ENCODE measurements at regions of chr1 and their contacts with region 1.

Region 1: GRCh38 chr1:31789259-31790065 is 25.3 kb upstream of the ADGRB2 start:
- DNase-seq: peak; percentile 99

Region 2: GRCh38 chr1:31531177-31531999 is 258.1 kb before region 1 on chr1:
- CTCF ChIA-PET with region 1: no interaction called
- POLR2A ChIA-PET with region 1: no interaction called
- DNase-seq: no peak

Region 3: GRCh38 chr1:31548907-31549808 is 240.3 kb before region 1 on chr1:
- CTCF ChIA-PET with region 1: interaction called, 11 read pairs
- POLR2A ChIA-PET with region 1: no interaction called
- DNase-seq: peak; percentile 96

Region 4: DNA sequence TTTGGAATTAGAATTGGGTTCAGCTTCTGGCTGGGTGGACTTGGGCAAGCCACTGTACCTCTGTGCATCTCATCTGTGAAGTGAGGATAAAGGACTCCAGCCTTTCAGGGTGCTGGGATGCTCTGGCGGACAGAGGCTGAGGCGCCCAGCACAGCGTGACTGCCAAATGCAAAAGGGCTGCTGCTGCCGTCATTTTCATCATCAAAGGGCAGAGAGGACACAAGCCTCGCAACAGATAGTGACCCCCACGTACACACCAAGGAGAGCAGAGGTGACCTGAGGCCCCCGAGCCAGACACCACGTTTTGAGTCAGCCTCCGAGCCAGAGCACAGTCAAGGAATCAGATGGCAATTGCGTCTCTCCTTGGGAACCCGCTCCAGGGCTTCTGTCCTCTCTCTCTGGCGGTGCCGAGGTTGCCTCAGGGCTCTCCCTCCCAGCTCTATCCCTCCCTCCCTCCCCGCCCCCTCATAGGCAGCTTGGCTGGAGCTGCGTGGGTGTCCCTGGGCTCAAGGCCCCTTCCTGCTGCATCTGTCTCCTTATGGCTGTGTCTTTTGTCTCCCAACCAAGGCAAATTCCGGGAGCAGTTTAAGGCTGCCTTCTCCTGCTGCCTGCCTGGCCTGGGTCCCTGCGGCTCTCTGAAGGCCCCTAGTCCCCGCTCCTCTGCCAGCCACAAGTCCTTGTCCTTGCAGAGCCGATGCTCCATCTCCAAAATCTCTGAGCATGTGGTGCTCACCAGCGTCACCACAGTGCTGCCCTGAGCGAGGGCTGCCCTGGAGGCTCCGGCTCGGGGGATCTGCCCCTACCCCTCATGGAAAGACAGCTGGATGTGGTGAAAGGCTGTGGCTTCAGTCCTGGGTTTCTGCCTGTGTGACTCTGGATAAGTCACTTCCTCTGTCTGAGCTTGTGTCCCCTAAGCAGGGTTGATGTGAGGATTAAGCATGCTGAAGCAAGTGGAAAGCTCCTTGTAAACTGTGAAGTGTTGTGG is 162.9 kb before region 1 on chr1:
- CTCF ChIA-PET with region 1: no interaction called
- POLR2A ChIA-PET with region 1: no interaction called
- DNase-seq: no peak

Region 5: DNA sequence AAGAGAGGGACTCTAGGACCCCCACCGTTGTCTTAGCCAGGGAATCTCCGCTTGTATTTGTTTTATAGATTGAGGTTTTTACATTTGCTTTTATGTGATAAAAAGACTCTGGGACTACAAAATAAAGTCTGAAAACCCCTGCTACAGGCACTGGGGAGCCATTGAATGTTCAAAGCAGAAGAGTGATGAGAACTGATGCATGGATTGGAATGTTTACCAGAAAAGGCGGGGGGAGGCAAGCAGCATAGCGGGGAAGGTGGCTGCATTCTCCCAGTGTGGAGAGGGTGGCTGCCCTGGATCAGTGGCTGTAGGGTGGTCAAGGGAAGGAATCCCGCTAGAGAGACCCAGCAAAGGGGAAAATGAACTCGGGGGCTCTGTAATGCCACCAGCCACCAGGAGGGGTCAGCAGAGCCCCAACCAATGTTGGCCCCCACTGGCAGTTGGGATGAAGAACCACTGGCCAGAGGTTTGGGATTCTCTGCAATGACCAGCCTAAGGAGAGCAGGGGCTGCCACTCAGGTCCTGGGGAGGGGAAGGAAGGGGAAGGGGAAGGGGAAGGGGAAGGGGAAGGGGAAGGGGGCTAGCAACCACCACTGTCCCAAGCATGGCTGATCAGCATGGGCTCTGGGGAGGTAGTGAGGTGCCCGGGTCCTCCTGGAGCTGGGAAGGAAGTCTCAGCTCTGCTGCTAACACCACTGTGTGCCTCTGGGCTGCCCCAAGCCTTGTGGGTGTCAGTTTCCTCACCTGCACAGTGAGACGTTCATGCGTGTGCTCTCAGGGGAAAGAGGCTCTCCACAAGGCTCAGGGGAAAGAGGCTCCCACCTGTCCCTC is 125.6 kb before region 1 on chr1:
- CTCF ChIA-PET with region 1: interaction called, 22 read pairs
- POLR2A ChIA-PET with region 1: no interaction called
- DNase-seq: peak; percentile 95

Region 6: GRCh38 chr1:31715087-31715872 is 74.2 kb before region 1 on chr1:
- CTCF ChIA-PET with region 1: interaction called, 17 read pairs
- POLR2A ChIA-PET with region 1: interaction called, 8 read pairs
- DNase-seq: peak; percentile 96

Region 7: DNA sequence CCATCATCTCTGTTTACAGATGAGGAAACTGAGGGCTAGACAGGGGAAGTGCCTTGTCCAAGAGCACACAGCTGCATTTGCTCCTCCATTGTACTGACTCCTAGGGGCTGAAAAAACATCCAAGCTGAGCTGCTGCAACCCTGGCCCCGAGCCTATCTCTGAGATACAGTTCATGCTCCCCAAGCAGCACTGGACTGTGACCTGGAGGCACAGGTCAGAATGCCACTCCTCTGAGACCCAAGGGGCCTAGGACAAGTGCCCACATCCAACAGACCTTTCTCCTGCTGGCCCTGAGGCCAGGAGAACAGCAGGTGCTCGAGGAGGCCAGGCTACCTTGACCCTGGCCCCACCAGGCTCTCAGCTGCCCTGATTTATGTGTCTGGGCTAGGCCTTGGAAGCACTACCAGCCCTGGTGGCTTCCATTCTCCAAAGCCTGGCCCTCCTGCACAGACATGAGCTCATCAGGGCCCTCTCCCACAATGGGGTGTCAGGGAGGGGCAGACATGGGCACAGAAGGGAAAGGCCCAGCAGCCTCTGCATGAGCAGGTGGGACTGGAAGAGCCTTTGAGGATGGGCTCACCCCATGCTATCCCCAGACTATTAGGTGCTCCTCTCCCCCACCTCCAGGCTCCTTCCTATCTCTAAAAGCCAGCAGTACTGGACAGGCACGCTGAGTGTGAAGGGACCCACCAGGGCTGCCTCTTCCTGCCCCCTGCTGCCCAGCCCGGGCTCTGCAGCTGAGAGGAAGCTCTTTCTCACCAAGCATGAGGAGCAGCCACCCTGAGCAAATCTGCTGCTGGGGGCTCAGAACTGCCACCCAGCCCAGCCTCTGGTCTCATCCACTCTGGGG is 44.1 kb before region 1 on chr1:
- CTCF ChIA-PET with region 1: interaction called, 18 read pairs
- POLR2A ChIA-PET with region 1: no interaction called
- DNase-seq: peak; percentile 95

Region 8: DNA sequence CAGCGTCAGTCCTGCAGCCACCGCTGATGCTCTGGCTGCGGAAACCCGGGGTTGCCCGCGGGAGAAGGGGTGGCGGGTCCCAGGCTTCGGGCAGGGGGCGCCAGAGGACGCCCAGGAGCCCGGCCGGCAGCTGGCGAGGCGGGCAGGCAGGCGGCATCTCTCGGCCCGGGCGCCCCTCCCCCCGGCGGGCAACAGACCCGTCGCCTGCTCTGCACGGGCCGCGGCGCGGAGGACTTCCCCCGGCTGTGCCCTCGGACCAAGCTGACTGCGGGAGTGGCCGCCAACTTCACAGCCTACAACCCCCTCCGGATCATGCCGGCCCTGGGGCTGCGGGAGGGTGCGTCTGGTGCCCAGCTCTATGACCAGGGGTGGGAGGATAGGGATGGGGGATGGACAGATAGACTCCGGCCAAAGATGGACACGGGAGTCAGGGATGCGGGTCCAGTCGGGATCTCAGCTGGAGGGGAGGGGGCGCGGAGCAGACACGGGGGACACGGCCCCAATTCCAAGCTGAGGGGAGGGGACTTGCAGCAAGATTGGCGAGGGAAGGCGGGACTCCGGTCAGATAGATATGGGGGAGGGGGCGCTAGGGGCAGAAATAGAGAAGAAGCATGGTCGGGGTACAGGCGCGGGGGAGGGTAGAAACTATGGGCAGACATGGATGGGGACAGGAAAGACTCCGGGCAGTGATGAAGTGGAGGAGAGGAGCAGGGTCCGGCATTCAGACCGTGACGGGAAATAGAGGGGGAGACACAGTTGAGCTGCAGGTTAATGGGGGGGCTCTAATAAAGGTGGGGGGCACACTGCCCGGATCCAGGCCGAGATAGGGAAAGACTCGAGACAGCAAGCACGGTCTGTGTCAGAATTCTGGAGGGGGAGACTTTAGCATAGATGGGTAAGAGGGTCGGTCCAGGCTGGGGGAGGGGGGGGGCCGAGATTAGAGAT is 26.5 kb before region 1 on chr1:
- CTCF ChIA-PET with region 1: interaction called, 17 read pairs
- POLR2A ChIA-PET with region 1: interaction called, 3 read pairs
- DNase-seq: peak; percentile 88

Region 9: DNA sequence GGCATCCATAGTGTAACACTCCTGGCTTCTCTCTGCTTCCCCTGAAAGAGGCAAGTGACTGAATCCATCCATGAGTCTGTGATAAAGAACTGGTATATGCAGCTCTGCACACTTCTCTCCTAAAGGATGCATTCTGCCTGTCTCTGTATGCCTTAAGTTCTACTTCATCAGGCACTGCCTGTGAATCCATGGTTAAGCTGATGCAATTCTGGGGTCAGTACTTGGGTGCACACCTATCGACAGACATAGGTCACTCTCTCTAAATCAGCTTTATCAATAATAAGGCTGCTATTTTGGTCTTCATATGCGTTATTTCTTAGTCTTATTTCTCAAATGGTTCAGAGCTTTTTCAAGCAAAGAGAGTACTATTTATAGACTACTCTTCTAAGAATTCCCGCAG is 181.4 kb after region 1 on chr1:
- CTCF ChIA-PET with region 1: no interaction called
- POLR2A ChIA-PET with region 1: no interaction called
- DNase-seq: no peak

Measured in HEK293T (cell line).